ENCODE measurements at regions of chr1 and their contacts with region 1.

Region 1: DNA sequence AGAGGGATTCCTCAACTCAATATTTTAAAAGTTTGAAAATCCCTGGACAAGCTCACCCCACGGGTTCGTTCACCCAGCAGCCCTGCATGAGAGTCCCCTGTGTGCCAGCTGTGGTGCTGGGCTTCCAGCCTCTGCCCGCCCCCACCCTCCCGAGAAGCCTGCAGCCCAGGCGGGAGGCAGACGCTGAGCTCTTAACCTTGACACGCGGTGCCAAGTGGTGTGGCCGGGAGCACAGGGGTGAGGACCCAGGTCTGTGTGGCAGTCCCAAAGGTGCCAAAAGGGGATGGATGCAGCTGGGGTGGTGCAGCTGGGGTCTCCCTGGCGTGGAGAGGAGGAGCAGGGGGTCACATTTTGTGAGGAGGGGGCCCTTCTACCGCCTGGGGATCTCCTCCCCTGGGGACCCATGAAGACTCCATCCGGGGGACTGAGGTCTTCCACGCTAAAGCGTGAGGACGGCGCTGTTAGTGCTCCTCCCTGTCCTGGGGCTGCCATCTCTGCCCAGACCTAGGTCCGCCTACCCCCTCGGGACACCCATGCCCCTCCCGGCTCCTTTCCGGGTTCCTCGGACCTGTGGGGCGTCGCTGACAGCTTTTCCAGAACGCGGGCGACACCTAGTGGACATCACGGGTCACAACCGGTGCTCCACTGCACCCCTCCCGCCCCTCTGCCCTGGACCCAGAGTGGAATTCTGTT is 12.9 kb downstream of the PLA2G2F start:
- DNase-seq: peak; percentile 82
- H3K4me3 ChIP-seq: peak overlapping the region; percentile 27
- H3K27ac ChIP-seq: no peak overlapping the region
- H3K4me1 ChIP-seq: no peaks in the 10 kb centered on the region
- H3K27me3 ChIP-seq: no peaks in the 10 kb centered on the region
- CTCF ChIP-seq: peak; percentile 92

Region 2: GRCh38 chr1:19918057-19918456 is 234.0 kb before region 1 on chr1:
- CTCF ChIA-PET with region 1: interaction called, 3 read pairs
- POLR2A ChIA-PET with region 1: no interaction called
- intact Hi-C with region 1: loop called (anchors 2 kb)
- DNase-seq: peak; percentile 83
- H3K4me3 ChIP-seq: no peak overlapping the region
- H3K27ac ChIP-seq: no peak overlapping the region
- H3K4me1 ChIP-seq: no peaks in the 10 kb centered on the region
- H3K27me3 ChIP-seq: no peaks in the 10 kb centered on the region
- CTCF ChIP-seq: peak; percentile 92

Region 3: DNA sequence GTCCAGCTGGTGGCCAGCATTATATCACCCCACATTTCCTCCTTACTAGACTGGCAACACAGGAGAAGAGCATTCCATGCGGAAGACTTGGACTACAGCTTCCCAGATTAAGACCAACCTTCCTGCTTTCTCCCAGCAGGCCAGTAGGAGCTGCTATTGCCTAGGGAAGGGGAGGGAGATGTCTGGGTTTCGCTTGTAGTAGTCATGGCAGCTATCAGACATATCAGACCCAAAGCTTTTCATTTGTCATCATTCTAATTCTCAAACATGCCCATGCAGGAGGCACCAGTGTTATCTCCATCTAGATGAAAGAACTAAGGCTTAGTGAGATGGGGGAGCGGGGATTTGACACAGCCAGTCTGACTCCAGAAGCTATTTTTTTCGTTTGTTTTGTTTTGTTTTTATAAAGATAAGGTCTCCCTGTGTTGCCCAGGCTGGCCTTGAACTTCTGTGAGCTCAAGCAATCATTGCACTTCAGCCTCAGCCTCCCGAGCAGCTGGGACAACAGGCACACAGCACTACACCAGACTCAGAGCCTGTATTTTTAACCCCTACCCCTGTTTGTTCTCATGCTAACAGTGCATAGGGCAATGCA is 177.1 kb before region 1 on chr1:
- CTCF ChIA-PET with region 1: interaction called, 4 read pairs
- POLR2A ChIA-PET with region 1: no interaction called
- intact Hi-C with region 1: loop called (anchors 10 kb)
- DNase-seq: peak; percentile 71
- H3K4me3 ChIP-seq: no peak overlapping the region
- H3K27ac ChIP-seq: no peak overlapping the region
- H3K4me1 ChIP-seq: peaks cover 4% of the 10 kb centered on the region
- H3K27me3 ChIP-seq: no peaks in the 10 kb centered on the region
- CTCF ChIP-seq: peak; percentile 78

Region 4: DNA sequence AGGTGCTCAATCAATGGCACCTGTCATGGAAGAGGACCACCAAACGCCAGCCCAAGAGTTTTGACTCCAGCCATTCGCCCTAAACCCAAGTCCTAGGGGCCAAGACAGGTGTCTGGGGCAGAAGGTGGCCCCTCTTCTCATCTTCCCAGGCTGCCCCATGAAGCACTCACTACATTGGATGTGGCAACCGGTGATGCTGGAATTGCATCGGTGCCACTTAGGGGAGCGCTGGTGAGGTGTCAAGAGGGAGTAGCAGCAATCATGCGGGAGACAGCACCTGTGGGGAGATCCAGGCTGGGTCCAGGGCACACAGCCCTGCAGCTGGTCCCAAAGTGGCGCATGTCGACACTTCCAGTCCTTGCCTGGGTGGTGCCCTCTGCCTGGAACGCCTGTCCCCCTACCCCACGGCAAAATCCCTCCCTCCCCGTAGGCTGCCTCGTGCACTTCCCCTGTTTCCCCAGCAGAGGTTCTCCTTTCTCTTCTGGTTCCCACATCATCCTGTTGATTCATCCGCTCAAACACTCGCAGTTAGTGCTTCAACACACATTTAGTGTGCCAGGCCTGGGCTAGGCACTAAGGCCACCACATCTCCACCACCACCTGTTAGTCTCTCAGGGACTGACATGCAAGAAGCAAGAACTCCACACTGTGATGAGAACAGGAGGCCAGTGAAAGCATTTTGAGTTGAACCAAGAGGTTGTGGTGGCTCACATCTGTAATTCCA is 51.3 kb before region 1 on chr1:
- CTCF ChIA-PET with region 1: no interaction called
- POLR2A ChIA-PET with region 1: no interaction called
- intact Hi-C with region 1: loop called (anchors 2 kb)
- DNase-seq: peak; percentile 62
- H3K4me3 ChIP-seq: no peak overlapping the region
- H3K27ac ChIP-seq: no peak overlapping the region
- H3K4me1 ChIP-seq: no peaks in the 10 kb centered on the region
- H3K27me3 ChIP-seq: no peaks in the 10 kb centered on the region
- CTCF ChIP-seq: peak; percentile 76

Region 5: GRCh38 chr1:20837554-20838192 is 685.6 kb after region 1 on chr1:
- CTCF ChIA-PET with region 1: no interaction called
- POLR2A ChIA-PET with region 1: no interaction called
- intact Hi-C with region 1: no loop called
- DNase-seq: no peak
- H3K4me3 ChIP-seq: no peak overlapping the region
- H3K27ac ChIP-seq: no peak overlapping the region
- H3K4me1 ChIP-seq: no peaks in the 10 kb centered on the region
- H3K27me3 ChIP-seq: no peaks in the 10 kb centered on the region
- CTCF ChIP-seq: no peak

Measured in A673 (cell line).